Endothelial cell of umbilical vein (primary cell): ENCODE measurements at regions of chr11 and their contacts with region 1.

Region 1: GRCh38 chr11:57493507-57494503 is 21.7 kb downstream of the SLC43A1 start:
- DNase-seq: peak; percentile 42
- H3K4me3 ChIP-seq: no peak overlapping the region
- H3K27ac ChIP-seq: no peak overlapping the region
- H3K4me1 ChIP-seq: no peaks in the 10 kb centered on the region
- H3K27me3 ChIP-seq: no peaks in the 10 kb centered on the region
- CTCF ChIP-seq: peak; percentile 85 to 91
- POLR2A ChIP-seq: no peak

Region 2: DNA sequence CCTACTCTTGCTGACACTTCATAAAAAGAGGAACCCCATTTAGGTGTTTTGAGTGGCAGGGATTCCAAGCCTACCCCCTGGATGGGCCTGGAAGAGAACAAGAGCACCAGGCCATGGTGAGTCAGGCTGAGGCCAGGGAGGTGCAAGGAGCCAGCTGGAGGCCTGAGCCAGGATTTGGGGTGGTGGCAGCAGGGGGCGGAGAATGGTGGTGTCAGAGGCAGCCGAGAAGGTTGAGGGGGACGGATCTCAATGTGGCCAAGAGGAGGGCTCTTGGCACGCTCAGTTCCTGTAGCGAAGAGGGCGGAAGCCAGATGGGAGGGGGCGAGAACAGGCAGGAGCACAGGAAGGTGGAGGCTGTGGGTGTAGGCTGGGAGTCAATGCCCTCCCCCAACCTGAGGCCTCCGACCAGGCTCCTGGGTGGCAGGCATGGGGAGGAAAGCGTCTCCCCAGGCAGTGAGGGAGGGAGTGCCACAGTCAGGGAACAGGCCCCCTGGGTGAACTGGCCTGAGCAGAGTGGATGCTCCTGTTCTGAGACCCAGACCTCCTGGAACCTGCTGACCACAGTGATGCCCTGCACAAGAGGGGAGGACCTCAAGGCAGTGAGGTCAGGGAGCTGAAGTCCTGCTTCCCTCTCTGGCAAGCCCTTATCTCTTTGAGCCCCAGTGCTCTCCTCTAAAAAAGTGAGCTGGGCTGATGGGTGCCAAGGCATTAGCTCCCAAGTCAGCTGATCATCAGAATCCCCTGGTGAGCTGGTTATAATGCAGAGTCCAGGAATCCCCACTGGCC is 19.6 kb before region 1 on chr11:
- CTCF ChIA-PET with region 1: interaction called, 105 read pairs
- POLR2A ChIA-PET with region 1: no interaction called
- dilution Hi-C with region 1: no loop called
- intact Hi-C with region 1: no loop called
- DNase-seq: no peak
- H3K4me3 ChIP-seq: no peak overlapping the region
- H3K27ac ChIP-seq: no peak overlapping the region
- H3K4me1 ChIP-seq: peaks cover 7% of the 10 kb centered on the region
- H3K27me3 ChIP-seq: peaks cover 5 to 27% of the 10 kb centered on the region in 2 experiments
- CTCF ChIP-seq: no peak
- POLR2A ChIP-seq: no peak

Region 3: GRCh38 chr11:57480409-57481137 is 13.2 kb before region 1 on chr11:
- CTCF ChIA-PET with region 1: interaction called, 105 read pairs
- POLR2A ChIA-PET with region 1: no interaction called
- dilution Hi-C with region 1: no loop called
- intact Hi-C with region 1: no loop called
- DNase-seq: peak; percentile 46
- H3K4me3 ChIP-seq: no peak overlapping the region
- H3K27ac ChIP-seq: no peak overlapping the region
- H3K4me1 ChIP-seq: peaks cover 9% of the 10 kb centered on the region
- H3K27me3 ChIP-seq: peaks cover 7 to 28% of the 10 kb centered on the region in 2 experiments
- CTCF ChIP-seq: peak; percentile 75 to 85
- POLR2A ChIP-seq: no peak

Region 4: DNA sequence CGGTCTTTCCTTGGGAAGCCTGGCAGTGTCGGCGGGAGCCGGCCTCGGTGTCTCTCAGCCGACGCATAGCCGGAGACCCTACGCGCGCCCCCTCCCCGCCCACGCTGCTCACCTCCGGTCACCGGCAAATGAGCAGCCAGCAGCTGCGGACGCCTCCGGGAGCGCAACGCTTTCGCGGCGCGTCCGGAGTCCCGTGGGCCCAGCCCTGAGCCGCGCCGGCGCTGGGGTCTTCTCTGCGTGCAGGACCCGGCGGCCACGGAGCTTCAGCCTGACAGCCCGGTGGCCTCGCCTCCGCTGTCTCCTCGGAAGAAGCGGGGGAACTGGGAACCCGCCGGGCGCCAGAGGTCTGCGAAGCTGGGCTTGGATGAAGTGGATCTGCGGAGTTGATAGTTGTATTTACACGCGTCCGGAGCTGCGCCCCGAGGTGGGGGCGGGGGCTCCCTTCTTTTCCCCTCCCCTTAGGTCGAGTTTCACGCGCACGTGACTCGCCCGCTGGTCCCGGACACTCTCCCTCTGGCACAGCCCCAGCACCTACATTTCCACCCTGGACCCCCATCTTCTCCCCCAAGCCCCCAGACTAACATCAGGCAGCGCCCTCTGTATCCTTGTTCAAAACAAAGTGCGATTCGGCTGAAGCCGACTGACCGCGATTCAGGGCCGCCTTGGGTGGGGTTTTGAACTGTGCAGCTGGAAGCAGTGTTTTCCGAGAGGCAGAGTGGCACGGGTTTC is 21.7 kb after region 1 on chr11 and contains the start of gene SLC43A1:
- CTCF ChIA-PET with region 1: interaction called, 166 read pairs
- POLR2A ChIA-PET with region 1: interaction called, 4 read pairs
- dilution Hi-C with region 1: no loop called
- intact Hi-C with region 1: loop called (anchors 1 kb)
- DNase-seq: peak; percentile 69
- H3K4me3 ChIP-seq: peak within 1 kb of the TSS; percentile 64 to 79 (median 68)
- H3K27ac ChIP-seq: no peak within 1 kb of the TSS
- H3K4me1 ChIP-seq: peaks cover 9% of the 10 kb centered on the region
- H3K27me3 ChIP-seq: no peaks in the 10 kb centered on the region
- CTCF ChIP-seq: no peak
- POLR2A ChIP-seq: peak; percentile 25
- total RNA-seq, gene SLC43A1: 11.3 and 13.7 TPM in 2 replicates

Region 5: DNA sequence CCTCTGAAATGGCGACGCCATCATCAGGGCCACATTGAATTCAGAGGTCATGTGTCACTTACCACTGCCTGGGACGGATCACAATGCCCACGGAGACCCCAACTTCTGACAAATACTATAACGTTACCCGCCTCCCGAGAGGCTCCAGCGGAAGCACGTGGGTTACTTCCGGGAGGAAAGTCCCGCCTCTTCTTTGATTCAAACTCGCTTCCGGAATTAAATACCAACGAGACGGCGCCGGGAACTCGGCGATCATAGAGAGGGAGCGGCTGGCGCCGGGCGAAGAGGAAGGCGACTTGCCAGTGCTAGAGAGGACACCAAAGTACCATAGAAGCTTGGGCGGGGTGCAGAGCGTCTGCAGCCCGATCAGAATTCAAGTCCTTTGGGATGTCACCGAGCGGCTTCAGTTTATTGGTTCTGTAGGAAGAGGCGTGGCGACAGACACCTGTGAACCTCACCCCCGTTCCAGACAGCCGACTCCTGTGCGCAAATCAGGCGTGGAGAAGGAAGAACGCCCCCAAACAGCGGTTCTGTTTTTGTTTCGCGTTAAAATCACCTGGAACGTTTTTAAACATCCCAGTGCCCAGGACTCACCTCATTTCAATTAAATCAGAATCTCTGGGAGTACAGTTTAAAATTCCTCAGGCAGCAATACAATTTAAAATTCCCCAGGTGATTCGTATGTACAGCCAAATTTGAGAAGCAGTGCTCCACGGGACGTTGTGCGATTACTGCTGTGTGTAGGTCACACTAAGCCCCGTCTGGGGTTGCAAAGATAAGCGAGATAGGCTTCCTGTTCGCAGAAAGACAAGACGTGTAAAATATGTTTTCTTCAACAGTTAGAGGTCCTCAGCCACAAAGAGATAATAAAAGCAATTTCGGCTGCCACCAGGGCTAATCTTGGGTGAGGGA is 37.0 kb after region 1 on chr11 and contains the start of gene TIMM10:
- CTCF ChIA-PET with region 1: interaction called, 316 read pairs
- POLR2A ChIA-PET with region 1: no interaction called
- dilution Hi-C with region 1: no loop called
- intact Hi-C with region 1: loop called (anchors 1 kb)
- DNase-seq: peak; percentile 96
- H3K4me3 ChIP-seq: peak within 1 kb of the TSS; percentile 53 to 74 (median 69)
- H3K27ac ChIP-seq: peak within 1 kb of the TSS; percentile 48
- H3K4me1 ChIP-seq: peaks cover 21% of the 10 kb centered on the region
- H3K27me3 ChIP-seq: peaks cover 0 to 2% of the 10 kb centered on the region in 2 experiments
- CTCF ChIP-seq: no peak
- POLR2A ChIP-seq: peak; percentile 45
- total RNA-seq, gene TIMM10: 64.2 and 105 TPM in 2 replicates

Region 6: DNA sequence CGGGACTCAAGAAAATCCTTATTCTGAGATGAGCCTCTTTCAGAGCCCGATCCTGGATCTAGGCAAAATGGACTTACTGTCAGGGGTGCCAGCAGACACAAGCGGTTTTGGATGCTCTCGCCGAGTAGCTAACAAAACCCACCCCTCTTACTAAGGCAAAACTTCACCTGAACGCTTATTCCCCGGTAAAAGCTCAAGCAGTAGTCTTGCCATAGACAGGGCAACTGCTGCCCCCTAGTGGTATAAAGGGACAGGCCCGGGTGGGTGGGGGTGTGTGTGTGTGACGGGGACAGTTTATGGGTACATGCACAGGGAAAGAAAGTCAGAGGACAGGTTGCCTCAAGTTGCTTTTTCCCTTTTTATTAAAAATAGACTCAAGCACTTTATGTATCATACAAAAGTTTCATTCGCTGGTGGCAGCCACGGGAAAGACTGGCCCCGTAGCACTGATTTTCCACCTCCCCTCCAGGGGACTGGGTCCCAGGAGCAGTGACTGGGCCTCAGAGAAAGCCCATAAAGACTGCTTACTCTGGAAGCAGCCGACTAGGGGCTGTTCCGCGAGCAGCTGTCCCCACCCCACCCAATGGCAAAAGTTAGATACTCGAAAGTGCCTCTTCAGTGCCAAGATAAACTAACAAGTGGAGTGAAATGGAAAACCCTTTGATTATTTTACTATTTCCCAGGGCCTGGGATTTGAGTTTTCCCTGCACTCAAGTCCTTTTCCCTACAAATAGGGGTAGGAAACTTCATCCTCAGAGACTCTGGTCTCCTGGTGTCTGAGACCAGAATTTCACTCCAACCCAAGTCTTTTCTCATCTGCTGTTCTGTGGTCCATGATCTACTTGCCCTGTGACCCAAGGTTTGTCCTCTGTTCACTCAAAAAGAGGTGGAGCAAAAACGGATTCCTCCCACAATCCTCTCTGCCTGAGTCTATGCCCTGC is 151.2 kb after region 1 on chr11:
- CTCF ChIA-PET with region 1: interaction called, 50 read pairs
- POLR2A ChIA-PET with region 1: no interaction called
- dilution Hi-C with region 1: no loop called
- intact Hi-C with region 1: loop called (anchors 1 kb)
- DNase-seq: peak; percentile 68
- H3K4me3 ChIP-seq: no peak overlapping the region
- H3K27ac ChIP-seq: no peak overlapping the region
- H3K4me1 ChIP-seq: peaks cover 14% of the 10 kb centered on the region
- H3K27me3 ChIP-seq: peaks cover 38 to 44% of the 10 kb centered on the region in 2 experiments
- CTCF ChIP-seq: peak; percentile 78 to 86
- POLR2A ChIP-seq: no peak

Region 7: GRCh38 chr11:58513747-58514367 is 1020.1 kb after region 1 on chr11:
- CTCF ChIA-PET with region 1: interaction called, 3 read pairs
- POLR2A ChIA-PET with region 1: no interaction called
- dilution Hi-C with region 1: no loop called
- intact Hi-C with region 1: loop called (anchors 5 kb)
- DNase-seq: peak; percentile 73
- H3K4me3 ChIP-seq: no peak overlapping the region
- H3K27ac ChIP-seq: no peak overlapping the region
- H3K4me1 ChIP-seq: no peaks in the 10 kb centered on the region
- H3K27me3 ChIP-seq: peaks cover 18 to 32% of the 10 kb centered on the region in 2 experiments
- CTCF ChIP-seq: peak; percentile 57 to 68
- POLR2A ChIP-seq: no peak